Spleen (tissue), 13 donors: ENCODE measurements at regions of chr2 and their contacts with region 1.

Region 1: DNA sequence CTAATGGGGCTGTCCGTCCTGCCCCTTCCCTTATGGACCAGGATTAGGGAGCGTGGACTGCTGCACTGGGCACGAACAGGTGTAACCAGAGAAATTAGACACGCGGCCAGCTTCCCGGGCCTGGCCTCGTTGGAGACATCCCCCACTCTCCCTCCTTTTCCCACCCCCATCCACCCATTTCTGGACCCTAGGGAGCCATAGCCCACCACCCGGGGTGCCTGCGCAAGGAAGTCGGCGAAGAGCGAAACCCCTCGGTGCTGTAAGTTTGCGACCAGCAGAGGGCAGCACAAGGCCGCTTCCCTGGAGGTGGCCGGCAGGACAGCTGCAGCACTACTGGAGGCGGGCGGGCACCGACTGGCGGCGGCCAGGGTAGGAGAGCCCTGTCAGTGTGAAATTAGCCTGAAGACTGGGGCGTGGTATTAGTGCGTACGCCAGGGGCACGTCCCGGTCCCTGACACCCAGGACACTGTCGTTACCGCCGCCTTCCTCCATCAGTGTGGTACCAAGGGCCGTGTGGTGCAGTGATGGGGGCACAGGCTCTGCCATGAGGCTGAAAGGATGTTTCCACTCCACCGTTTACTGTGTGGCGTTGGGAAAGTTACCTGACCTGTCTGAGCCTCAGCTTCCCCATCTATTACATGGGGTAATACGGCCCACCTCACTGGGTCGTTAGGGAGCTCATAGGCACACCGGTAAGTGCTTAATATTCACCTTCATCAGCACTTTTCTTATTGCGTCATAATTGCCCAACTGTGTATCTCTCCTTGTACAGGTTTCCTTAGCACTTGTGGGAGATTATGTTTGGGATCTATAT is 36.0 kb upstream of the CD207 start:
- DNase-seq: peak; percentile 93
- H3K4me3 ChIP-seq: peak overlapping the region in 1 of 8 donors; percentile 49
- H3K27ac ChIP-seq: no peak overlapping the region
- H3K4me1 ChIP-seq: peaks cover 6 to 12% (median 8%) of the 10 kb centered on the region in 6 donors
- H3K27me3 ChIP-seq: peaks cover 0 to 72% (median 51%) of the 10 kb centered on the region in 7 donors
- CTCF ChIP-seq: peak; percentile 57 to 90 (median 85)
- POLR2A ChIP-seq: no peak

Region 2: DNA sequence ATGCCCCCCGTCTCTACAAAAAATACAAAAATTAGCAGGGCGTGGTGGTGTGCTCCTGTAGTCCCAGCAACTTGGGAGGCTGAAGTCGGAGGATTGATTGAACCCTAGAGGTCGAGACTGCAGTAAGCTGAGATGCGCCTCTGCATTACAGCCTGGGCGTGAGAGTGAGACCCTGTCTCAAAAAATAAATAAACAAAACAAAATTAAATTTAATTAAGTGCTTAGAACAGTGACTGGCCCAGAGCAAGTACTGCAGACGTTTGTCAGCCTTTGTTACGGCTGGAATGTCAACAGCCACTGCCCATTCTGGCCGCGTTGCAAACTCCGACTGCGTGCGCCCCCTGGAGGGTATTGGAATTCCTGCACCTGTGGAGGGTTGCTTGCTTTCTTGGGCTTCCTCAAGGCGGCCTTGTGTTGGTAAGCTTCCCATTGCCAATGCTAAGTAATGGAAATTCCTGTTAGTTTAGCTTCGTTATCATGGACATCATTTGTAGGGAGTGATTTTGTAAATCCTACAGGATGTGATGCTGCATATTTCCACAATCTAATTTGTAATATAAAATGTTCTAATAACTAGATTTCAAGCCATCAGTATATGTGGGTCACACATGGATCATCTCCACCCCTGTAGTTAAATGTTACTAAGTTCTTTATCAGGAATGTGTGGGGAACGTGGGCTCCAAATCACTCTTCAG is 48.2 kb after region 1 on chr2:
- intact Hi-C with region 1: loop called (anchors 10 kb)
- DNase-seq: peak; percentile 88
- H3K4me3 ChIP-seq: no peak overlapping the region
- H3K27ac ChIP-seq: no peak overlapping the region
- H3K4me1 ChIP-seq: peaks cover 0 to 12% (median 0%) of the 10 kb centered on the region in 6 donors
- H3K27me3 ChIP-seq: peaks cover 0 to 59% (median 11%) of the 10 kb centered on the region in 7 donors
- CTCF ChIP-seq: peak; percentile 56 to 92 (median 82)
- POLR2A ChIP-seq: no peak